T-cell (primary cell): ENCODE measurements at regions of chrX and their contacts with region 1.

Region 1: DNA sequence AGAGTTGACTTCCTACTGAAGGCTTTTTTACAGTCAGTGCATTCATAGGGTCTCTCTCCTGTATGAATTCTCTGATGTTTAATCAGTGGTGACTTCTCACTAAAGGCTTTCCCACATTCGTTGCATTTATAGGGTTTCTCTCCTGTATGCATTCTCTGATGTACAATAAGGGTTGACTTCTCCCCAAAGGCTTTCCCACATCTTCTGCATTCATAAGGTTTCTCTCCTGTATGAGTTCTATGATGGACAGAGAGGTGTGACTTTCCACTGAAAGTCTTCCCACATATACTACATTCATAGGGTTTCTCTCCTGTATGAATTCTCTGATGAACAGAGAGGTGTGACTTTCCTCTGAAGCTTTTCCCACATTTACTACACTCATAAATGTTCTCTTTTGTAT is 45.2 kb downstream of the ZNF674 start:
- DNase-seq: no peak
- ATAC-seq: no peak
- H3K4me3 ChIP-seq: no peak overlapping the region
- H3K4me3 Mint-ChIP-seq: no peak overlapping the region
- H3K27ac ChIP-seq: no peak overlapping the region
- H3K27ac Mint-ChIP-seq: no peak overlapping the region
- H3K4me1 ChIP-seq: no peaks in the 10 kb centered on the region
- H3K4me1 Mint-ChIP-seq: no peaks in the 10 kb centered on the region
- H3K27me3 ChIP-seq: no peaks in the 10 kb centered on the region
- H3K27me3 Mint-ChIP-seq: peaks cover 0 to 4% of the 10 kb centered on the region in 2 donors

Region 2: GRCh38 chrX:46978341-46979291 is 478.6 kb after region 1 on chrX:
- CTCF ChIA-PET with region 1: no interaction called
- POLR2A ChIA-PET with region 1: interaction called in 1 of 2 experiments, 12 read pairs
- DNase-seq: peak; percentile 2 to 77 (median 53)
- ATAC-seq: peak; percentile 48 to 60 (median 56)
- H3K4me3 ChIP-seq: no peak overlapping the region
- H3K4me3 Mint-ChIP-seq: no peak overlapping the region
- H3K27ac ChIP-seq: no peak overlapping the region
- H3K27ac Mint-ChIP-seq: no peak overlapping the region
- H3K4me1 ChIP-seq: no peaks in the 10 kb centered on the region
- H3K4me1 Mint-ChIP-seq: no peaks in the 10 kb centered on the region
- H3K27me3 ChIP-seq: no peaks in the 10 kb centered on the region
- H3K27me3 Mint-ChIP-seq: peaks cover 0 to 12% of the 10 kb centered on the region in 2 donors